ENCODE measurements at regions of chr11 and their contacts with region 1.

Region 1: DNA sequence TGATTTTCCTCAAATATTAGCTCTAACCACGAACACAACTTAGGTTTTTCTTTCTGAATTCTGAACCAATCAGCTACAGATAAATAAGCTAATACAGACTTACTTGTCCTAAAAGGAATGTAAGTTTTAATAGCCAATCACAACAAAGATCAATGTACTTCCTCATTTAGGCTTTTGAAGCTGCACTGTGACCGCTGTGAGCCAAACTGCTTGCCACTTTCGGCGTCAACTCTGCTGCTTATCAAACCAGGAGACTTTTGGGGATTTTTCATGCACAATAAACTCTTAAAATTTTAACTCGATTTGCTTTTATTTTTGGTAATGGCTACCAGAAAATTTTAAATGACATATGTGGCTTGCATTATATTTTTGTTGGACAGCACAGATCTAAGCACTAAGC is 92.5 kb downstream of the TMPRSS5 start:
- DNase-seq: no peak
- H3K4me3 ChIP-seq: no peak overlapping the region
- H3K27ac ChIP-seq: no peak overlapping the region
- H3K4me1 ChIP-seq: no peaks in the 10 kb centered on the region
- H3K27me3 ChIP-seq: peaks cover 16% of the 10 kb centered on the region
- CTCF ChIP-seq: no peak

Region 2: DNA sequence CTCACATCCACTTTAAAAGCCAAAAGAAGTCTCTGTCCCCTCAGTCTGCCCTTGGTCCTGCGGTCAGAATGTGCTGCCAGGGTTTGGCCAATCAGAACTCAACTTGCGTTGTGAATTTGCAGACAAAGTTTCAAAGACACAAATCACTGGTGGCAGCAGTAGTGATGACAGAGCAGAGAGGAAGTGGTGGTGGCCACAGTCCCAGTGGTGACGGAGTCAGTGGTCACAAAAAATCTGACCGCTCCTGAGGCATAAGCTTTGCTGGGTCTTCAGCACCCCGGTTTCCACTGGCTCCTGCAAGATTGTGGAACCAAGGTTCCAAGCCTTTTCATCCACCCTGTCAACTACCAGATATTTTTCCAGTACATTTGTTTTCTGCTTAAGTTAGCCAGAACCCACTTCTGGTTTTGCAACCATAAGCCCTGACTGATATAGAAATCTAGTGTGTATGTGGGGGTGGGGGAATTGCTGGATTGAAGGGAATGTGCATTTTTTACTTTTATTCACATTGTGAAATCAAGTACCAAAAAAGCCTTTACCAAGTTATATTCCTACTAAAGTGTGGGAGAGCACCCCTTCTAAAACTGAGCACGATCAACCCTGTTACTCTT is 19.8 kb before region 1 on chr11:
- CTCF ChIA-PET with region 1: no interaction called
- POLR2A ChIA-PET with region 1: no interaction called
- intact Hi-C with region 1: loop called (anchors 2 kb)
- DNase-seq: no peak
- H3K4me3 ChIP-seq: no peak overlapping the region
- H3K27ac ChIP-seq: no peak overlapping the region
- H3K4me1 ChIP-seq: no peaks in the 10 kb centered on the region
- H3K27me3 ChIP-seq: peaks cover 84% of the 10 kb centered on the region
- CTCF ChIP-seq: no peak

Measured in PC-9 (cell line).